Heart left ventricle (tissue), 16 donors: ENCODE measurements at regions of chr4 and their contacts with region 1.

Region 1: GRCh38 chr4:103099691-103100392 is at the start of gene BDH2:
- DNase-seq: peak in 3 of 5 donors; percentile 39 to 64 (median 58)
- ATAC-seq: peak; percentile 91 to 98 (median 96)
- H3K4me3 ChIP-seq: peak within 1 kb of the TSS; percentile 41 to 68 (median 56)
- H3K27ac ChIP-seq: peak within 1 kb of the TSS; percentile 31 to 77 (median 62)
- H3K4me1 ChIP-seq: peaks cover 0 to 32% (median 10%) of the 10 kb centered on the region in 12 donors
- H3K27me3 ChIP-seq: no peaks in the 10 kb centered on the region
- CTCF ChIP-seq: peak; percentile 66 to 84 (median 78)
- POLR2A ChIP-seq: no peak
- total RNA-seq, gene BDH2: 20.3 to 38.0 (median 25.8) TPM

Region 2: GRCh38 chr4:102439236-102439614 is 660.6 kb before region 1 on chr4:
- intact Hi-C with region 1: loop called in 5 of 10 experiments (anchors 10 kb)
- DNase-seq: peak in 1 of 5 donors; percentile 12
- ATAC-seq: peak; percentile 54 to 88 (median 68)
- H3K4me3 ChIP-seq: no peak overlapping the region
- H3K27ac ChIP-seq: peak overlapping the region in 7 of 12 donors; percentile 0 to 62 (median 50)
- H3K4me1 ChIP-seq: peaks cover 0 to 24% (median 13%) of the 10 kb centered on the region in 12 donors
- H3K27me3 ChIP-seq: no peaks in the 10 kb centered on the region
- CTCF ChIP-seq: no peak
- POLR2A ChIP-seq: no peak

Region 3: GRCh38 chr4:102610007-102610406 is 489.8 kb before region 1 on chr4:
- intact Hi-C with region 1: loop called in 2 of 10 experiments (anchors 5 to 10 kb)
- DNase-seq: no peak
- ATAC-seq: no peak
- H3K4me3 ChIP-seq: no peak overlapping the region
- H3K27ac ChIP-seq: no peak overlapping the region
- H3K4me1 ChIP-seq: peaks cover 0 to 31% (median 0%) of the 10 kb centered on the region in 12 donors
- H3K27me3 ChIP-seq: no peaks in the 10 kb centered on the region
- CTCF ChIP-seq: peak in 4 of 12 donors; percentile 15 to 25 (median 16)
- POLR2A ChIP-seq: no peak

Region 4: GRCh38 chr4:102620697-102621497 is 478.9 kb before region 1 on chr4:
- intact Hi-C with region 1: loop called in 8 of 10 experiments (anchors 5 to 10 kb)
- DNase-seq: no peak
- ATAC-seq: peak; percentile 91 to 95 (median 92)
- H3K4me3 ChIP-seq: peak overlapping the region in 7 of 12 donors; percentile 1 to 35 (median 17)
- H3K27ac ChIP-seq: peak overlapping the region in 1 of 12 donors; percentile 58
- H3K4me1 ChIP-seq: peaks cover 0 to 19% (median 4%) of the 10 kb centered on the region in 12 donors
- H3K27me3 ChIP-seq: no peaks in the 10 kb centered on the region
- CTCF ChIP-seq: peak; percentile 18 to 64 (median 46)
- POLR2A ChIP-seq: no peak

Region 5: DNA sequence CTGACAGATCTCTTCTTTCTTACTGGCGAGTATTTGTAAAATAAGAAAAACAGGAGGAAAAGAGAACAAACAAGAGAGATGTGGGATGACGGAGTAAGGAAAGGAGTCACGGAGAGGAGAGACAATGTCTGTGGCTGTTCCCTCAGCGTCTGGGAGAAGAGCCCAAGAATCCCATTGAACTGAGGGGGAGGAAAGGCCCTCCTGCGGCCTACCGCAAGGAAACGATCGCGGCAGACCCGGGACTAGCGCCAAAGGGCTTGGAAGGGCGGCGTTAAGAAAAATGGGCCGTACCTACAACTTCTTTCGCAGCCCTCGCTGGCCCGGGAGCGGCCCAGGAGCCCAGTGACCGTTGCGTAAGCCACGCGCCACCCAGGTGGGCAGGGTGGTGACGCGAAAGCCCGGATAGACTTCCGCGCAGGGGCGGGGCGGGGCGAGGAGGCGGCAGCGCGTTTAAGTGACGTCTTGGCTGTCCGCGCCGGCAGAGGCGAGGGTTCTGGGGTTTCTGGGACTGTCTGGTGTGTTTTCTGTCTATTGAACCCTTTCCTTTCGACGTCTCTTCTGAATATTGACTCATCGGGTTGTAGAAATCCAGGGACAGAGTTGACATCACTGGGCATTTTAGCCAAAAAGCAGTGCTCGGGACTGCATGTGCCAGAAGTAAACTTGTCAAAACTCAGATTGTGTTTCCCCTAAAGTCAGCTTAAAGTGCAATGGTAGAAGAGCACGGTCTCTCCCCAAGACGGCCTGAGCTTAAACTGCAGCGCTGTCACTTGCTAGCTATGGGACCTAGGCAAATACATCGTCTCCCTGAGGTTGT is 80.3 kb before region 1 on chr4 and contains the start of gene SLC9B1:
- intact Hi-C with region 1: loop called in 3 of 10 experiments (anchors 2 to 10 kb)
- DNase-seq: peak; percentile 95 to 97 (median 96)
- ATAC-seq: peak; percentile 99 to 100 (median 100)
- H3K4me3 ChIP-seq: peak within 1 kb of the TSS; percentile 30 to 67 (median 59)
- H3K27ac ChIP-seq: peak within 1 kb of the TSS; percentile 65 to 92 (median 88)
- H3K4me1 ChIP-seq: peaks cover 0 to 18% (median 5%) of the 10 kb centered on the region in 12 donors
- H3K27me3 ChIP-seq: no peaks in the 10 kb centered on the region
- CTCF ChIP-seq: no peak
- POLR2A ChIP-seq: peak in 1 of 2 donors; percentile 69
- total RNA-seq, gene SLC9B1: 0.28 to 1.8 (median 0.61) TPM in 6 of 9 donors, not detected in the others

Region 6: DNA sequence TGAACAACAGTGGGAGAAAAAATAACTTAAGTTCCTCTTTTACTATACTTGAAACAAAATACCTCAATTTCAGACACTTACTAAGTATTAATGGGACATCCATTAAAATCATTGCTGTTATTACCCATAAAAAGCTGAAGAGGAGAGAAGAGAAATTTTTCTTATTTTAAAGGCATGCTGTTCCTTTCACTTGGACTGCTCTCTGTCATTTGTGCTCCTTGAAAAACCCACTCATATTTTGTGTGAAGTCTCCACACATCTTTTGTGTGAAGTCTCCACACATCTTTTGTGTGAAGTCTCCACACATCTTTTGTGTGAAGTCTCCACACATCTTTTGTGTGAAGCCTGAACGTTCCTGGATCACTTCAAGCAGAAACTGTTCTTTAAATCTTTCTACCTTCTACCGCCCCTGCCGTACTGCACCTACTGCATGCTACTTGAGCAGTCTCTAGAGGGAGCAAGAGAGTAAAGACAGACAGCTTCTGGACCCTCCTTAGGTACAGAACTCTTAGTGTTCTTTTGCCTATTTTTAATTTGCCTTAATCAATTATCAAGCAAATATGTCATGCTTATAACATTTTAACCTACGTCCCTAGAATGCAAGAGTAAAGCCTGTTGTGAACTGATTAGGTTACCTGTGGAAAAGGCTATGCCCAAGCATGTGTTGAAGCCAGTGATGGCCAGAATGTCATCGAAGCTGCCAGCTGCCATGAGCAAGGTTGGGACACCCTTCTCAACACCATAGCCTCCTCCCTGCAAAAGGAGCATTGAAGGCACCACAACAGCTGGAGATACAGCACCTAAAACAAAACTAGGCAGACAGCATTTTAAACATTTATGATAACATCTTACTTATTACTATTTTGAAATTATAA is 53.2 kb before region 1 on chr4:
- intact Hi-C with region 1: loop called in 7 of 10 experiments (anchors 5 to 10 kb)
- DNase-seq: no peak
- ATAC-seq: peak in 3 of 4 donors; percentile 67 to 83 (median 80)
- H3K4me3 ChIP-seq: no peak overlapping the region
- H3K27ac ChIP-seq: no peak overlapping the region
- H3K4me1 ChIP-seq: no peaks in the 10 kb centered on the region
- H3K27me3 ChIP-seq: no peaks in the 10 kb centered on the region
- CTCF ChIP-seq: peak; percentile 59 to 75 (median 66)
- POLR2A ChIP-seq: no peak